CD8-positive, alpha-beta T cell (primary cell): ENCODE measurements at regions of chr14 and their contacts with region 1.

Region 1: GRCh38 chr14:50860478-50861086 is 11.3 kb upstream of the ABHD12B start:
- DNase-seq: peak; percentile 84 to 93 (median 90)
- ATAC-seq: peak; percentile 77
- H3K4me3 ChIP-seq: peak overlapping the region; percentile 72 to 98
- H3K4me3 Mint-ChIP-seq: peak overlapping the region; percentile 93
- H3K27ac ChIP-seq: peak overlapping the region in 1 of 2 experiments; percentile 65
- H3K27ac Mint-ChIP-seq: peak overlapping the region; percentile 87
- H3K4me1 ChIP-seq: peaks cover 11% of the 10 kb centered on the region
- H3K4me1 Mint-ChIP-seq: peaks cover 13% of the 10 kb centered on the region
- H3K27me3 ChIP-seq: no peaks in the 10 kb centered on the region
- H3K27me3 Mint-ChIP-seq: no peaks in the 10 kb centered on the region
- CTCF ChIP-seq: peak; percentile 83

Region 2: DNA sequence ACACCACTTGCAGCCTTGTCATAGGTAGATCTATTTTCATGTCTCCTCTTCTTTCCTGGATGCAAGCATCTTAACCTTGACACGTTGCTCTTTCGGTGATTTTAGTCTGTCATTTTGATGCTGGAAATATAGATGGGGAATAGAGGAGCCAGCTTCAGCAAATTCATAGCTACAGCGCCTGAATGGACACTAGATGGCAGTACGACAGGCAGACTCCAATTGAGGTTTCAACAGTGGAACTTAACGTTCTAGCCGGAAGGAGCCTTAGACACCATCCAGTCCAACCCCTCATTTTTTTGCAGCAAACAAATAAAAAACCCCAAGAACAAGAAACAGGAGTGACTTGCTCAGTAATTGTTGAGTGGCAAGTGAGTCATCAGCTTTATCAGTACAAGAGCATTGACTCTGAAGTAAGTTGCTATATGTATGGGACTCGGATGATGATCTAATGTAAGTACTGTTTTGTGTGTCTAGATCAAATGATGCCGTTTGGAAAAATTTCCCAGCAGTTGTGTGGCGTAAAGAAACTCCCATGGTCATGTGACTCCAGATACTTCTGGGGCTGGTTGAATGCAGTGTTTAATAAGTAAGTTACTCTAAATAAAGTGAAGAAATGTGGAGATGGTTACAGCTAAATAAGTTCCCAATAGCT is 539.4 kb before region 1 on chr14:
- CTCF ChIA-PET with region 1: interaction called, 12 read pairs
- POLR2A ChIA-PET with region 1: no interaction called
- intact Hi-C with region 1: loop called in 1 of 2 experiments (anchors 1 kb)
- DNase-seq: peak; percentile 29 to 93 (median 68)
- ATAC-seq: peak; percentile 95
- H3K4me3 ChIP-seq: no peak overlapping the region
- H3K4me3 Mint-ChIP-seq: no peak overlapping the region
- H3K27ac ChIP-seq: peak overlapping the region; percentile 10 to 59
- H3K27ac Mint-ChIP-seq: no peak overlapping the region
- H3K4me1 ChIP-seq: peaks cover 7% of the 10 kb centered on the region
- H3K4me1 Mint-ChIP-seq: peaks cover 21% of the 10 kb centered on the region
- H3K27me3 ChIP-seq: no peaks in the 10 kb centered on the region
- H3K27me3 Mint-ChIP-seq: no peaks in the 10 kb centered on the region
- CTCF ChIP-seq: peak; percentile 88

Region 3: DNA sequence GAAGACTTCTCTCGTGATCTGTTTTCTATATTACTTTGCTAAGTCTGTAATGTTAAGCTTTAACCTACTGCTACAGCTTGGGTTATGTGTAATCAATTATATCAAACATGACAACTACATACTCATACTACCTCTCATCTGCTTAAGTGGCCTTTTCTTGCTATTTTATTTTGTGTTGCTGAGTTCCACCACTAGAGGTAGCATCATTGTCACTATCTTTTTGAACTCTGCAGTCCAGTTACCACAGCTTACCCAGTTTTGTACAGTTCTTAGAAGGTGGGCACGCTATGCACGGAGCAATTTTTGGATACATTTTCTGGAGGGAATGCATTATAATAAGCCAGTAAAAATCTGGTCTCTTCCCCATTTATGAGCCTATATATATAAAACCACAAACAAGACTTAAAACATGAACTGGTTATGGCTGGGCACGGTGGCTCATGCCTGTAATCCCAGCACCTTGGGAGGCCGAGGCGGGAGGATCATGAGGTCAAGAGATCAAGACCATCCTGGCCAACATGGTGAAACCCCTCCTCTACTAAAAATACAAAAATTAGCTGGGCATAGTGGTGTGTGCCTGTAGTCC is 240.9 kb before region 1 on chr14:
- CTCF ChIA-PET with region 1: interaction called, 11 read pairs
- POLR2A ChIA-PET with region 1: interaction called, 6 read pairs
- intact Hi-C with region 1: loop called in 1 of 2 experiments (anchors 1 kb)
- DNase-seq: peak in 2 of 9 experiments; percentile 21 to 39
- ATAC-seq: no peak
- H3K4me3 ChIP-seq: no peak overlapping the region
- H3K4me3 Mint-ChIP-seq: no peak overlapping the region
- H3K27ac ChIP-seq: no peak overlapping the region
- H3K27ac Mint-ChIP-seq: no peak overlapping the region
- H3K4me1 ChIP-seq: no peaks in the 10 kb centered on the region
- H3K4me1 Mint-ChIP-seq: no peaks in the 10 kb centered on the region
- H3K27me3 ChIP-seq: no peaks in the 10 kb centered on the region
- H3K27me3 Mint-ChIP-seq: no peaks in the 10 kb centered on the region
- CTCF ChIP-seq: no peak

Region 4: GRCh38 chr14:50762001-50762930 is 98.3 kb before region 1 on chr14:
- CTCF ChIA-PET with region 1: interaction called, 11 read pairs
- POLR2A ChIA-PET with region 1: interaction called, 5 read pairs
- intact Hi-C with region 1: no loop called
- DNase-seq: no peak
- ATAC-seq: no peak
- H3K4me3 ChIP-seq: no peak overlapping the region
- H3K4me3 Mint-ChIP-seq: no peak overlapping the region
- H3K27ac ChIP-seq: no peak overlapping the region
- H3K27ac Mint-ChIP-seq: no peak overlapping the region
- H3K4me1 ChIP-seq: no peaks in the 10 kb centered on the region
- H3K4me1 Mint-ChIP-seq: peaks cover 7% of the 10 kb centered on the region
- H3K27me3 ChIP-seq: no peaks in the 10 kb centered on the region
- H3K27me3 Mint-ChIP-seq: no peaks in the 10 kb centered on the region
- CTCF ChIP-seq: no peak

Region 5: DNA sequence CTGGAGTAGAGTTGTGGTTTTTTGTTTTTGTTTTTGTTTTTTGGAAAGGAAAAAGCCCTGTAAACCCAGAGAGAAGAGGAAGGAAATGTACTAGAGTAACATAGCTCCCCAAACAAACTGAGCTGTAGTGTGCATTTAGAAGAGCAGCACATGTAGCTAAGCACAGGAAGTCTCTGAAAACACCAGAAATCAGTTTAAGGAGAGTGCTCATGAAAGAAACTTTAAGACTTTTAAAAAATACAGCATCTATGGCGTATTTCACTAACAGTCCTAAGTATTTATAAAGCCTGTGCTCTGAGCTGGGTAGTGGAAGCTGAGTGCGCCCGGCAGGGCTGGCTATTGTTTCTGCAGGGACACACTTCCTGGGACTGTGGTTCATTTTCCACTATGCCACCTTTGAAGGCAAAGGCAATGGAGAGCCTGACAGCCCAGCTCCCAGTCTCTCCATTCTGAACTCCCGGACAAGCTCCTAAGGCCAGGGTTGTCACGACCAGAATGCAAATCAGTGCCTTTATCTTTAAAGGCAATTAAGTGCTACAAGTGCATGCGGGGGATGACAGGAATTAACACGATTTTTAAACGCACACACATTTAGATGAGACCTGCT is 75.0 kb before region 1 on chr14:
- CTCF ChIA-PET with region 1: interaction called, 144 read pairs
- POLR2A ChIA-PET with region 1: interaction called, 20 read pairs
- intact Hi-C with region 1: no loop called
- DNase-seq: peak in 2 of 9 experiments; percentile 23 to 56
- ATAC-seq: peak; percentile 52
- H3K4me3 ChIP-seq: peak overlapping the region; percentile 3 to 32
- H3K4me3 Mint-ChIP-seq: peak overlapping the region; percentile 74
- H3K27ac ChIP-seq: peak overlapping the region; percentile 32 to 58
- H3K27ac Mint-ChIP-seq: peak overlapping the region; percentile 92
- H3K4me1 ChIP-seq: peaks cover 75% of the 10 kb centered on the region
- H3K4me1 Mint-ChIP-seq: peaks cover 96% of the 10 kb centered on the region
- H3K27me3 ChIP-seq: no peaks in the 10 kb centered on the region
- H3K27me3 Mint-ChIP-seq: no peaks in the 10 kb centered on the region
- CTCF ChIP-seq: no peak

Region 6: DNA sequence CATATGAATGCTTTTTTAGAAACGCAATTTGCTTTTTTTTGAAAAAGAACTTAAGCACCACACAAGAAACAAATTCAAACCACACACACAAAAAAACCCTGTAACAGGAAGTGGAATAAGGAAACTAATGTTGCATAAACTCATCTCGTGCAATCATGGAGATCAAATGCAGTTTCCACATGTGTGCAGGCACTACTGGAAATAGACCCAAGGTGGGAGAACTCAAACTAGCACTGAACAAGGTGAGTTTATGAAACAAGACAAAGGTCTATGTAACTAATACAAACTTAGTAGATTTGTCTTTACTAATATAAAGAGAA is 47.1 kb before region 1 on chr14:
- CTCF ChIA-PET with region 1: interaction called, 8 read pairs
- POLR2A ChIA-PET with region 1: interaction called, 8 read pairs
- intact Hi-C with region 1: loop called in 1 of 2 experiments (anchors 5 kb)
- DNase-seq: peak in 3 of 9 experiments; percentile 44 to 76 (median 57)
- ATAC-seq: peak; percentile 85
- H3K4me3 ChIP-seq: peak overlapping the region in 1 of 2 experiments; percentile 9
- H3K4me3 Mint-ChIP-seq: peak overlapping the region; percentile 77
- H3K27ac ChIP-seq: peak overlapping the region in 1 of 2 experiments; percentile 44
- H3K27ac Mint-ChIP-seq: peak overlapping the region; percentile 92
- H3K4me1 ChIP-seq: peaks cover 49% of the 10 kb centered on the region
- H3K4me1 Mint-ChIP-seq: peaks cover 69% of the 10 kb centered on the region
- H3K27me3 ChIP-seq: no peaks in the 10 kb centered on the region
- H3K27me3 Mint-ChIP-seq: no peaks in the 10 kb centered on the region
- CTCF ChIP-seq: no peak

Region 7: DNA sequence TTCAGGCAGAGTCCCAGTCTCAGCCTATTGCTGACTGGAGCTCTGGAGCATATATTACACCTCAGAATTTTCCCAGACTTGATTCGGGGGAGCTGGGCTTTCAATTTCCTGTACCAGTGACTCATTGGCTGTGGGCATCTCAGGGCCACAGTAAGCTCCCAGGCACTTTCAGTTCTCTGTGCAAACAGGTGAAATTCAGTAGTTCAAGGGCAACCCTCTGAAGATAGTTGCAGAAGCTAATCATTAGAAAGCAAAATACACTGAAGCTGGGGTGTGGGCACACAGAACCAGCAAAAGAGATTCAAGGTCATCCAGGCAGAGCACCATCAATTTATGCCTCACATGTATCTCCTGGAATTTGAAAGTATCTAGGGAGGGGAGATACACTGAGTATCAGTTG is 21.5 kb before region 1 on chr14:
- CTCF ChIA-PET with region 1: interaction called, 27 read pairs
- POLR2A ChIA-PET with region 1: interaction called, 8 read pairs
- intact Hi-C with region 1: loop called in 1 of 2 experiments (anchors 1 kb)
- DNase-seq: no peak
- ATAC-seq: no peak
- H3K4me3 ChIP-seq: no peak overlapping the region
- H3K4me3 Mint-ChIP-seq: no peak overlapping the region
- H3K27ac ChIP-seq: no peak overlapping the region
- H3K27ac Mint-ChIP-seq: no peak overlapping the region
- H3K4me1 ChIP-seq: peaks cover 13% of the 10 kb centered on the region
- H3K4me1 Mint-ChIP-seq: peaks cover 39% of the 10 kb centered on the region
- H3K27me3 ChIP-seq: no peaks in the 10 kb centered on the region
- H3K27me3 Mint-ChIP-seq: no peaks in the 10 kb centered on the region
- CTCF ChIP-seq: no peak

Region 8: GRCh38 chr14:50901361-50901760 is 40.8 kb after region 1 on chr14:
- CTCF ChIA-PET with region 1: no interaction called
- POLR2A ChIA-PET with region 1: no interaction called
- intact Hi-C with region 1: no loop called
- DNase-seq: no peak
- ATAC-seq: no peak
- H3K4me3 ChIP-seq: no peak overlapping the region
- H3K4me3 Mint-ChIP-seq: no peak overlapping the region
- H3K27ac ChIP-seq: no peak overlapping the region
- H3K27ac Mint-ChIP-seq: no peak overlapping the region
- H3K4me1 ChIP-seq: no peaks in the 10 kb centered on the region
- H3K4me1 Mint-ChIP-seq: no peaks in the 10 kb centered on the region
- H3K27me3 ChIP-seq: peaks cover 0 to 2% of the 10 kb centered on the region in 2 experiments
- H3K27me3 Mint-ChIP-seq: peaks cover 10% of the 10 kb centered on the region
- CTCF ChIP-seq: no peak